Activated T-helper 2 cell treated with anti-CD3 and anti-CD28 coated beads, Interferon-gamma antibody, Interleukin-2, Interleukin-4, amounts not matched to agents 10 μg/mL and 5 μg/mL and 100 μg/mL, durations not matched to agents 14 hours and 24 hours and 36 hours (primary cell): ENCODE measurements at regions of chr18 and their contacts with region 1.

Region 1: DNA sequence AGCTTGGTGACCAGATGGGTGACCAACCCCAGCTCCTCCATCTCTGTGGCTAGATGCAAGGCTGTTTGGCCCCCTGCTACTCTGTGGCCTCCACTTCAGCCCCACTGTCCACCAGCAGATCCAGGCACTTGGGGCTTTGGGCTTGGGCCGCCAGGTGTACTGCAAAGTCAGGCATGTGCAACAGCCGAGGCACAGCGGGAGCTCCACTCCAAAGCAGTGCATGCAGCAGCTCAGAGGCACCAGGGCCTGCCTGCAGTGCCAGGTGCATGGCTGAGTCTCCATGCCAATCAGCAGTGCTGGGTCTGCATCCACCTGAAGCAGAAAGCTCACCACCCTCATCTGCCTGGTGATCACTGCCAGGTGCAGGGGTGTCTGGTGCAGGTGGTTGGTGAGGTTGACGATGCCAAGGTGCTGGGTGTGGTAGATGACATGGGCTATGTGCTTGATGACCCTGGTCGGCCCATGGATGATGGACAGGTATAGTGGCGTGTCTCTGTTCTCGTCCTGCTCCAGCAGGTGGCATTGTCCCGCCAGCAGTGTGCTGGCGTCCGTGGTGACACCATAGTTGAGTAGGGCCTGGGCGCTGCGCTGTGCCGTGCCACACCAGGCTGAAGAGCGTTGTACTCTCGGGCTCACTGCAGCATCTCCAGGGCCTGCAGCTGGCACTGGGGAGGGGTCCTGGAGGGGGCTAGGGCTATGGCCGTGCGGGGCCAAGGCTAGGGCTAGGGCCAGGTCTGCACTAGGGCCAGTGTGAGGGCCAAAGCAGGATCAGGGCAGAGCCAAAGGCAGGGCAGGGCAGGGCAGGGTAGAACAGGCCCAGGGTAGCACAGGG is 1.0 kb upstream of the ANKRD62 start:
- DNase-seq: no peak
- H3K4me3 Mint-ChIP-seq: no peak overlapping the region
- H3K27ac Mint-ChIP-seq: no peak overlapping the region
- H3K4me1 Mint-ChIP-seq: peaks cover under 1% of the 10 kb centered on the region
- H3K27me3 Mint-ChIP-seq: peaks cover 4% of the 10 kb centered on the region

Region 2: GRCh38 chr18:12106471-12106870 is 13.9 kb after region 1 on chr18:
- intact Hi-C with region 1: no loop called
- DNase-seq: no peak
- H3K4me3 Mint-ChIP-seq: no peak overlapping the region
- H3K27ac Mint-ChIP-seq: no peak overlapping the region
- H3K4me1 Mint-ChIP-seq: peaks cover 4% of the 10 kb centered on the region
- H3K27me3 Mint-ChIP-seq: peaks cover 45% of the 10 kb centered on the region

Region 3: GRCh38 chr18:12236934-12237832 is 144.6 kb after region 1 on chr18:
- intact Hi-C with region 1: loop called (anchors 1 kb)
- DNase-seq: peak; percentile 65
- H3K4me3 Mint-ChIP-seq: no peak overlapping the region
- H3K27ac Mint-ChIP-seq: no peak overlapping the region
- H3K4me1 Mint-ChIP-seq: peaks cover 14% of the 10 kb centered on the region
- H3K27me3 Mint-ChIP-seq: peaks cover 32% of the 10 kb centered on the region